A673 (cell line): ENCODE measurements at regions of chr5 and their contacts with region 1.

Region 1: DNA sequence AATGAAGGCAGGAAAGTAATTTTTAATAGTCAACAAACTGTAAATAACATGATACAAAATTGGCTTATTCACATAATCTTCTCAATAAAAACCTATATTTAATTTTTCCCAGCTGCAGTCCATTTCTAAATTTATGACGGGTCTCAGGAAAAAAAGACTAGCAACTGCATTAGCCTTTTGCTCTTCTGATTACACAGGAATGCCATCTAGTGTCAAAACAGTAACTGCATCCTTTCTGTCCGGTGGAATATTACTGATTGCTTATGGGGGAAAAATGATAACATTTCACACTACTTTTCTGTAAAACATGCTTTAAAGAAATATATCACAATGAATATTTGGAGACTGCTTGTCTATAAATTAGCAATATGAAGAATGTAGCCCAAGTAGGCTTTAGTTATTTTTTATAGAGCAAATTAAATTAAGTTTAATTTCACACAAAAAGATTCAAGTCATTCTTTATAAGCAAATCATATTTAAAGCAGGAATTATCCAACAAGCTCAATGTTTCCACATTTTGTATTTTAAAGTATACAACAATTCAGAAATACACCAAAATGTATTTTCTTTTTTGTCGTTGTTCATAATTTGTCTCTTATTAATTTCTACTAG is 534.7 kb downstream of the CDH10 start:
- DNase-seq: peak; percentile 73
- H3K4me3 ChIP-seq: no peak overlapping the region
- H3K27ac ChIP-seq: no peak overlapping the region
- H3K4me1 ChIP-seq: no peaks in the 10 kb centered on the region
- H3K27me3 ChIP-seq: no peaks in the 10 kb centered on the region
- CTCF ChIP-seq: peak; percentile 89

Region 2: DNA sequence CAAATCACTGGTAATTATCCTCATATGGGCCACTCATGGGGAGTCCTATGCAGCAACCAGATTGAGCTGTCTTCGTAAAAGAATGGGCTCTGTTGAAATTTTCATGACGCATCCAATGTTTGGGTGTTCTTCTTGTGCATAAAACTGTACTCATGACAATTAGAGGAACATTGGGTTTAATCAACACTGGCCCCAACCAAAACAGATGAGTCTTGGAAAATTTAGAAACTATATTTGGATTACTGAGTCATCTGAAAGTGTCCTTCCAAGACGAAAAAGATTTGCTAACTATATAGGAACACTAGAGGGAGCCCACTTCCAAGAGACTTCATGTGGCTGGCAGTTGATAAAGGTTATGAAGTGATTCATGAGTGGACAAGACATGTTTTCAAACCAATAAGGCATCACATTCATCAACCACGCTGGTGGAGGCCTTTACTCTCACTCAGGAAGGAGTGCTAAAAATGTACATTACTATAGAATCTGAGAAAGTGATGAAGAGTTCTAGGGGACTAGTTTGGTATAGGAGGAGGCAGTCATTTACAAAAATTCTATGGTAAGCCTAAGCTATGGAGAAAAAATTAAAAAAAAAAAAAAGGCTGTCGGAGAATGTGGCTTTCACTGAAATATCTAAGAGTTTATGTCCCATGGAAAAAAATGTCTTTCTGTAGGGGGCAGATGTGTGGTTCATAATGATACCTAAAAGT is 289.2 kb before region 1 on chr5:
- CTCF ChIA-PET with region 1: interaction called, 3 read pairs
- POLR2A ChIA-PET with region 1: no interaction called
- intact Hi-C with region 1: loop called (anchors 2 kb)
- DNase-seq: peak; percentile 69
- H3K4me3 ChIP-seq: no peak overlapping the region
- H3K27ac ChIP-seq: no peak overlapping the region
- H3K4me1 ChIP-seq: no peaks in the 10 kb centered on the region
- H3K27me3 ChIP-seq: no peaks in the 10 kb centered on the region
- CTCF ChIP-seq: peak; percentile 74

Region 3: GRCh38 chr5:24005384-24005783 is 104.7 kb before region 1 on chr5:
- CTCF ChIA-PET with region 1: no interaction called
- POLR2A ChIA-PET with region 1: no interaction called
- intact Hi-C with region 1: loop called (anchors 2 kb)
- DNase-seq: no peak
- H3K4me3 ChIP-seq: no peak overlapping the region
- H3K27ac ChIP-seq: no peak overlapping the region
- H3K4me1 ChIP-seq: no peaks in the 10 kb centered on the region
- H3K27me3 ChIP-seq: no peaks in the 10 kb centered on the region
- CTCF ChIP-seq: peak; percentile 58